HCT116 (cell line): ENCODE measurements at regions of chr6 and their contacts with region 1.

Region 1: DNA sequence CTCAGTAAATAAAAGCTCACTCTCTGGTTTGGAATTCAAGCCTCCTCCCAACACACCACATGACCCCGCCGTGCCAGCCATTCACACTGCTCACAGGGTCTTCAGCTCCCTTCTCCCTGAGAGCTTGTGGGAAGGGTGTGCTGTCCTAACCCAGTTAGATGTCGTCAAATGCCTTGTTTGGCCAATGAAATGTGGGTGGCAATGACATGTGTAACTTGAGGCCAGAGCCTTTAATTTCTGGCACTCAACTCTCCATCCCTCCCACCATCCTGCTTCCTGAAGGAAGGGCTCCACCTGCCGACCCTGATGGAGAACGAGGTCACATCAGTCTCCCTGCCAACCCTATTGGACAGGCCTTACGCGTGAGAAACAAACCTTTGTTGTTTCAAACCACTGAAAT is 224.5 kb upstream of the AGPAT4 start:
- DNase-seq: peak; percentile 66
- ATAC-seq: peak; percentile 98
- H3K4me3 ChIP-seq: no peak overlapping the region
- H3K27ac ChIP-seq: no peak overlapping the region
- H3K4me1 ChIP-seq: no peaks in the 10 kb centered on the region; a peak in 1 of 4 replicates
- H3K27me3 ChIP-seq: no peaks in the 10 kb centered on the region
- CTCF ChIP-seq: peak; percentile 59 to 82 (median 67)
- POLR2A ChIP-seq: no peak
- RAD21 ChIP-seq: peak; percentile 92

Region 2: GRCh38 chr6:160464744-160465143 is 1033.6 kb before region 1 on chr6:
- CTCF ChIA-PET with region 1: no interaction called
- POLR2A ChIA-PET with region 1: no interaction called
- RAD21 ChIA-PET with region 1: no interaction called
- intact Hi-C with region 1: no loop called
- DNase-seq: no peak
- ATAC-seq: no peak
- H3K4me3 ChIP-seq: no peak overlapping the region
- H3K27ac ChIP-seq: no peak overlapping the region
- H3K4me1 ChIP-seq: peaks cover 0 to 3% of the 10 kb centered on the region in 2 experiments; a peak in 1 of 4 replicates
- H3K27me3 ChIP-seq: no peaks in the 10 kb centered on the region
- CTCF ChIP-seq: no peak
- POLR2A ChIP-seq: no peak
- RAD21 ChIP-seq: no peak

Region 3: DNA sequence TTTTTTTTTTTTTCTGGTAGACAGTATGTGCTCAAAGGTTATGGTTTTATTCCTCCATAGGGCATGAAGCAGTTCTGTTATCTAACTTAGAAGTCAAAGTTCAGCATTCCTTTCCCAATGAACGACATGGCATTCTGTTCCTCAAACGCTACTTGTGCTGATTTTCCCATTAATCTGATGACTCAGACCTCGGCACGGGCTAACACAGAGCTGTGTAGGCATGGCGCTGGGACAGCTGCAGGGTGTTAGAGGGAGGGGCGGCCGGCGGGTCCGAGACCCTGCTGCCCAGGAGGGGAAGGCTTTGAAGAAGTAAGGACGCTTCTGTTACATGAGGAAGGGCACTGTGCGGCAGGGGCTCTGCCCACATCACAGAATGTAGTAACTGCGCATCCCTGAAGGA is 130.9 kb before region 1 on chr6:
- CTCF ChIA-PET with region 1: no interaction called
- POLR2A ChIA-PET with region 1: no interaction called
- RAD21 ChIA-PET with region 1: no interaction called
- intact Hi-C with region 1: no loop called
- DNase-seq: no peak
- ATAC-seq: no peak
- H3K4me3 ChIP-seq: no peak overlapping the region
- H3K27ac ChIP-seq: no peak overlapping the region
- H3K4me1 ChIP-seq: peaks cover 0 to 16% of the 10 kb centered on the region in 2 experiments; a peak in 1 of 4 replicates
- H3K27me3 ChIP-seq: no peaks in the 10 kb centered on the region
- CTCF ChIP-seq: no peak
- POLR2A ChIP-seq: no peak
- RAD21 ChIP-seq: no peak

Region 4: DNA sequence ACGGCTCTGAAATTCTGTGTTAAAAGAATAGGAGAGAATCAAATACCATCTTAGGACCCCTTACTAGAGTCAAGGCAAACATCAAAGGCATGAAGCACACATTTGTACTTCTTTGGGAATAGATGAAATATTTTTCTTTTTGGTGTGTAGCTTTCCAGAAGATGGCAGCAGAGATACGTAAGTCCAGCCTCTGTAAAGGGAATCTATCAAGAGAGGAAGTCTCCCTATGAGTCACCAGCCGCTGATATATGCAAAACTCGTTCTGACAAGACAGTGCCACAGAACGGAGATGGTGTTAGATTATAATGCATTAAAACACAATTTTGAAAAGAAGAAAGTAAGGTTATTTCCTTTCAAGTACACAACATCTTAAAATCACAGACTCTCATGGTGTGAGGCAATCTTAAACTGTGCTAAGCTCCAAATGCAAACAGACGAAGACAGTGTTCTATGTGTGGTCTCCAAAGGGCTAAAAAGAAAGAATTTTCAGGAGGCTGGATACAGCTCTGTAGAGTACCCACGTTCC is 104.5 kb before region 1 on chr6:
- CTCF ChIA-PET with region 1: interaction called, 10 read pairs
- POLR2A ChIA-PET with region 1: no interaction called
- RAD21 ChIA-PET with region 1: interaction called in 1 of 2 experiments, 5 read pairs
- intact Hi-C with region 1: loop called (anchors 1 kb)
- DNase-seq: peak; percentile 75
- ATAC-seq: peak; percentile 97
- H3K4me3 ChIP-seq: no peak overlapping the region
- H3K27ac ChIP-seq: no peak overlapping the region
- H3K4me1 ChIP-seq: peaks cover 0 to 6% of the 10 kb centered on the region in 2 experiments; a peak in 2 of 4 replicates
- H3K27me3 ChIP-seq: no peaks in the 10 kb centered on the region
- CTCF ChIP-seq: peak; percentile 27 to 76 (median 73); a peak in 4 of 6 replicates
- POLR2A ChIP-seq: no peak
- RAD21 ChIP-seq: peak; percentile 89

Region 5: DNA sequence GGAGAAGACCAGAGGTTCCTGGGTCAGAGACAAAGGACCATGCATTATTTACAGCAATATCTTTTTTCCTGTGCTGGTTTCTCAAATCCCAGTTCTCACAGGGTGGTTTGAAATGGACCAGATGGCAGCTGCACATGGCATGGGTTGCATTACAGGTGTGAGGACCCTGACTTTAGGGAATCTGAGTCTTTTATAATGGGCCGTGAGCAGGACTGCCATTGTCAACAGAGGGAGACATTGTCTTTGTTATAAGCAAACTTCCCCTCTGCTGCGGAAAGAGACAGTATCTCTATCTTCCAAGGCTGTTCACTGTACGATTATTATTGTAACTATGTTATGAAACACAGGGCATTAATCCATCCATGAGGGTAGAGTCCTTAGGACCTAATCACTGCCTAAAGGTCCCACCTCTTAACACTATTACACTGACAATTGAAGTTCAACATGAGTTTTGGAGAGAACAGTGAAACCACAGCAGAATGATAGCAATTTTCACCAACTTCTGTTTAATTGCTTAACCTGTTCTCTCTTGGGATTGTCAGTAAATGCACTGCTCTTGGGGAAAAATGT is 68.4 kb before region 1 on chr6:
- CTCF ChIA-PET with region 1: interaction called, 5 read pairs
- POLR2A ChIA-PET with region 1: no interaction called
- RAD21 ChIA-PET with region 1: no interaction called
- intact Hi-C with region 1: loop called (anchors 1 kb)
- DNase-seq: no peak
- ATAC-seq: peak; percentile 75
- H3K4me3 ChIP-seq: no peak overlapping the region
- H3K27ac ChIP-seq: no peak overlapping the region
- H3K4me1 ChIP-seq: peaks cover 4 to 10% of the 10 kb centered on the region in 2 experiments; a peak in 3 of 4 replicates
- H3K27me3 ChIP-seq: no peaks in the 10 kb centered on the region
- CTCF ChIP-seq: peak in 2 of 3 experiments; percentile 30 to 52; a peak in 3 of 6 replicates
- POLR2A ChIP-seq: no peak
- RAD21 ChIP-seq: peak; percentile 67

Region 6: DNA sequence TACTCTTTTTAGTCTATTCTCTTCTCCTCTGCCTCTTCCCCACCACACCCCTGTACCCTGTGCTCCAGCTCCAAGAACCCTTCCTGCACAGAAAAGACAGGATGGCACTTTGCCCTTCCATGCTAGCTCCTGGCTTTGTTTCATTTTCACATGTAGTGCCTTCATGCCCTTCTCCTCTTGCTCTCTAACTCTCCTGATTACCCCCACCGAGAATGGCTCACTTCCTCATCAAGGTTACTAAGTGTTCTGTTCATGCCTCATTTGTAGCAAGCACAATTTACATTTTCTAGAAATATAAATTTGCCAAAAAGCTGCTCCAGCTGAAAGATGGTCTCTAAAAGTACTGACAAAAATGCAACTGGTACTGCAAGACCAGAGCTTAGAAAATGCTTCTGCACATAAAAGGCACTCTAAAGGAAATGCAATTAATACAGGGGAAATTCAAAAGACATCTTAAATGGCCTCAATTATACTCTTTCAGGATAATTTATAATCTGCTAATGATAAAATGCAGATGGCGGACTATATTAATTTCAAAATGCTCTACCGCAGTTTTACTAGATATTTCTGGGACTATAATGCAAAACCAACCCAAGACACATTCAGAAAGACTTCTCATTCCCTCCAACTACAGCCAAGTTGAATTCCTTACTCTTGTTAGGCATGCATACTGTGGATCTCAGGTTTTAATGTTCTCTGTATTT is 659.0 kb after region 1 on chr6:
- CTCF ChIA-PET with region 1: no interaction called
- POLR2A ChIA-PET with region 1: no interaction called
- RAD21 ChIA-PET with region 1: no interaction called
- intact Hi-C with region 1: no loop called
- DNase-seq: no peak
- ATAC-seq: no peak
- H3K4me3 ChIP-seq: no peak overlapping the region
- H3K27ac ChIP-seq: no peak overlapping the region
- H3K4me1 ChIP-seq: no peaks in the 10 kb centered on the region
- H3K27me3 ChIP-seq: no peaks in the 10 kb centered on the region
- CTCF ChIP-seq: no peak
- POLR2A ChIP-seq: no peak
- RAD21 ChIP-seq: no peak